Activated T-helper 1 cell treated with anti-CD3 and anti-CD28 coated beads, Interleukin-12 subunit alpha, Interleukin-12 subunit beta, Interleukin-2, Interleukin-4 antibody, amounts not matched to agents 30 ng/mL and 10 ng/mL and 1 ng/mL, durations not matched to agents 14 hours and 24 hours and 36 hours (primary cell): ENCODE measurements at regions of chr21 and their contacts with region 1.

Region 1: GRCh38 chr21:45478115-45478801 is 64.0 kb downstream of the SLC19A1 start:
- DNase-seq: peak; percentile 68
- H3K4me3 Mint-ChIP-seq: peak overlapping the region; percentile 92
- H3K27ac Mint-ChIP-seq: peak overlapping the region; percentile 99
- H3K4me1 Mint-ChIP-seq: peaks cover 32% of the 10 kb centered on the region
- H3K27me3 Mint-ChIP-seq: no peaks in the 10 kb centered on the region

Region 2: DNA sequence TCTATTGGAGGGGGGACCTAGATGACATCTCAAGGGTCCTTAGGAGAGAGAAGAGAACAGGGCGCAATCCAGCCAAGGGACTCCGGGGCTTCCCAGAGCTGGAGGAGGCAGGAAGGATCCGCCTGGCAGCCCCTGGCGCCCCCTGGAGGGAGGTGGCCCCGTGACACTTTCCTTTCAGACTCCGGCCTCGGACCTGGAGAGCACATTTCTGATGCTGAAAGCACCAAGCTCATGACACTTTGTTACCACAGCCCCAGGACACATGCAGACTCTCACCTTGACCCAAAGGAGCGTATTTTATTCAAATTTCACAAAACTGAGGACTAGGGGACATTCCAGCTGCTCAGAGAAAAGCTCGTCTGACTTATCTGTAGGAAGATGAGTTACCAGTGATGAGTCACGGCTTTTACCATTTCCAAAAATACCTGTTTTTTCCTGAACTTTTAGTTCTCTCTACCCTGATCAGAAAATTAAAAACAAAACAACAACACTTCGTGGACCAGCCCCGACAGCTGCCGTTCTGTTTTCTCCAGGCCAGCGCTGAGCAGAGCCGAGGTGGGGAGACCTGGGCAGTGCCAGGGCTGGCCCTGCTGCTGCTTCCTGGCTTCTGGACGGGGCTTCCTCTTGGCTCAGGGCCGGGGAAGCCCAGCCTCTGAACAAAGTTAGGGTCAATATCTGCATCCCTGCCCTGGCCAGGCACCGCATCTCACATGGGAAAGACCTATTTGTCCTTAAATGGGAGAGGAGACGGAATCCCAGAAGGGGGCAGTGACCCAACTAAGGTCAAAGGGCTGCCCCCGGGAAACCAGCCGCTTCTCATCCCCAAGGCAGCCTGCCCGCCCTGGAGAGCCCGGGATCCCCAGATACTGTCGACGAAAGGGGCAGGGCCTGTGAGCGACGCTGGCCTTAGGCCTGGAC is 168.9 kb before region 1 on chr21:
- intact Hi-C with region 1: no loop called
- DNase-seq: peak; percentile 18
- H3K4me3 Mint-ChIP-seq: no peak overlapping the region
- H3K27ac Mint-ChIP-seq: peak overlapping the region; percentile 74
- H3K4me1 Mint-ChIP-seq: peaks cover 7% of the 10 kb centered on the region
- H3K27me3 Mint-ChIP-seq: peaks cover 9% of the 10 kb centered on the region

Region 3: GRCh38 chr21:45542242-45542666 is 64.0 kb after region 1 on chr21 and contains the start of gene SLC19A1:
- intact Hi-C with region 1: loop called (anchors 2 kb)
- DNase-seq: peak; percentile 78
- H3K4me3 Mint-ChIP-seq: peak within 1 kb of the TSS; percentile 89
- H3K27ac Mint-ChIP-seq: peak within 1 kb of the TSS; percentile 68
- H3K4me1 Mint-ChIP-seq: peaks cover 14% of the 10 kb centered on the region
- H3K27me3 Mint-ChIP-seq: no peaks in the 10 kb centered on the region
- total RNA-seq, gene SLC19A1: 104 and 105 TPM in 2 replicates

Region 4: GRCh38 chr21:45596704-45597318 is 118.6 kb after region 1 on chr21:
- intact Hi-C with region 1: loop called (anchors 1 kb)
- DNase-seq: peak; percentile 73
- H3K4me3 Mint-ChIP-seq: no peak overlapping the region
- H3K27ac Mint-ChIP-seq: peak overlapping the region; percentile 4
- H3K4me1 Mint-ChIP-seq: peaks cover 9% of the 10 kb centered on the region
- H3K27me3 Mint-ChIP-seq: peaks cover 2% of the 10 kb centered on the region